ENCODE measurements at regions of chr22 and their contacts with region 1.

Region 1: GRCh38 chr22:28051787-28052356 is 132.8 kb upstream of the PITPNB start:
- DNase-seq: peak; percentile 66
- H3K4me3 ChIP-seq: no peak overlapping the region
- H3K27ac ChIP-seq: no peak overlapping the region
- H3K4me1 ChIP-seq: peaks cover 15% of the 10 kb centered on the region
- H3K27me3 ChIP-seq: no peaks in the 10 kb centered on the region
- CTCF ChIP-seq: peak; percentile 85
- POLR2A ChIP-seq: no peak

Region 2: DNA sequence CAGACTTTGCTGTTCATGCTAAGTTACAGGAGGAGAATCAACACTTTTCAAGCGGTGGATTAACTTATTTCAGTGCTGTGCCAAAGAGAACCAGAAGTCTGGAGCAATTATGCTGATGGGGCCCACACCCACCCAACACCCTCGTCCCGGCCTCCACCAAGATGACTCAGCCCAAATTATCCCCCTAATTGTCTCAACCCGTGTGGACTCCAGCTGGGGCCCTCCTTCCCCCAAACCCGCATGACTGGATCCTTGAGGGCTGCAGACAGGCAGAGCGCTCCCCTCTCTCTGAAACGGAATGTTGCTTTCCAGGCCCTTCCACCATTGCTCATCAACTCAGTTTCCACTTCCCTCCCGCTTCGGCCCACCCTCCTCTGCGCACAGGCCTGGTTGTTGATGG is 215.7 kb before region 1 on chr22:
- CTCF ChIA-PET with region 1: no interaction called
- POLR2A ChIA-PET with region 1: no interaction called
- dilution Hi-C with region 1: no loop called
- intact Hi-C with region 1: no loop called
- DNase-seq: no peak
- H3K4me3 ChIP-seq: no peak overlapping the region
- H3K27ac ChIP-seq: no peak overlapping the region
- H3K4me1 ChIP-seq: no peaks in the 10 kb centered on the region
- H3K27me3 ChIP-seq: no peaks in the 10 kb centered on the region
- CTCF ChIP-seq: no peak
- POLR2A ChIP-seq: no peak

Region 3: DNA sequence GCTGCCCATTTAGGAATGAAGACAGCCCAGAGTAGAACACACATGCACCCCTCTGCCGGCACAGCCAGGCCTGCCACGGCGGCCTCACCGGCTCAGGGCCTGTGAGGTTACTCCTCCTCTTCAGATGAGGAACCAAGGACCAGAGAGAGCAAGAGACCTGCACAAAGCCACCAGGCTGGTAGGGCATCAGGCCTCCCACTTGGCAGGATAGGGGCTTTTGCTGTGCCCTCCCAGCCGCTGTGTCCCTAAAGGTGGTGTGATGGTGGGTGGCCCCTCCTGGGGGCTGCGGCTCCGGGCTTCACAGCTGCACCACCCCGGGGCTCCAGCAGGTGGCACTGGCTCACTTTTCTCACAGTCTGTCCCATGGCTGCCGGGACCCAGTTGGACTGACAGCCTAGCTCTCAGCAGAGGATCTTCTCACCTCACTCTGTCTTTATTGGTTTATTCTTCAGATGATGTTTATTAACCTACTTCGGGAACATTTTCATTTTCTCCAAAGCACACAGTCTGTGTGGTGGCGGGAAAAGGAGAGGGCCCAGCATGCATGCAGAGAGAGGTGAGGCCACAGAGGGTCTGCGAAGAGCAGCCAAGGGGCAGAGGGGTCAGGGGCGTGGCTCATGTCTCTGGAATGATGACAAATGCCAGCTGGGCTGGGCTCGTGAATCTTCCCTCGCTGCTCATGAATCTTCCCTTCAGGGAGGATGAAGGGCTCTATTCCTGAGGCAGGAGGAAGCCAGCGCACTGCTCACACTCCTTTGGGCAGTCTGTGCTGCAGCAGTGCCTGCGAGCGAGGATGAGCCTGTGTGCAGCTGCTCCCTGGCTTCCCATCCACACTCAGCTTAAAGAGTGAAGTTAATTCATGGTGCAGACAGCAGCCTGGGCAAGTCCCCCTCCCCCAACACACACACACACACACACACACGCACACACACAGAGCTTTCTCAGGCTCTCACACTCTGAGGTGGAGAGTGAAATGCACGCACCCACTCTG is 31.7 kb before region 1 on chr22:
- CTCF ChIA-PET with region 1: interaction called, 56 read pairs
- POLR2A ChIA-PET with region 1: no interaction called
- dilution Hi-C with region 1: no loop called
- intact Hi-C with region 1: loop called (anchors 1 kb)
- DNase-seq: peak; percentile 52
- H3K4me3 ChIP-seq: no peak overlapping the region
- H3K27ac ChIP-seq: no peak overlapping the region
- H3K4me1 ChIP-seq: peaks cover 9% of the 10 kb centered on the region
- H3K27me3 ChIP-seq: no peaks in the 10 kb centered on the region
- CTCF ChIP-seq: peak; percentile 95 to 98
- POLR2A ChIP-seq: no peak

Region 4: DNA sequence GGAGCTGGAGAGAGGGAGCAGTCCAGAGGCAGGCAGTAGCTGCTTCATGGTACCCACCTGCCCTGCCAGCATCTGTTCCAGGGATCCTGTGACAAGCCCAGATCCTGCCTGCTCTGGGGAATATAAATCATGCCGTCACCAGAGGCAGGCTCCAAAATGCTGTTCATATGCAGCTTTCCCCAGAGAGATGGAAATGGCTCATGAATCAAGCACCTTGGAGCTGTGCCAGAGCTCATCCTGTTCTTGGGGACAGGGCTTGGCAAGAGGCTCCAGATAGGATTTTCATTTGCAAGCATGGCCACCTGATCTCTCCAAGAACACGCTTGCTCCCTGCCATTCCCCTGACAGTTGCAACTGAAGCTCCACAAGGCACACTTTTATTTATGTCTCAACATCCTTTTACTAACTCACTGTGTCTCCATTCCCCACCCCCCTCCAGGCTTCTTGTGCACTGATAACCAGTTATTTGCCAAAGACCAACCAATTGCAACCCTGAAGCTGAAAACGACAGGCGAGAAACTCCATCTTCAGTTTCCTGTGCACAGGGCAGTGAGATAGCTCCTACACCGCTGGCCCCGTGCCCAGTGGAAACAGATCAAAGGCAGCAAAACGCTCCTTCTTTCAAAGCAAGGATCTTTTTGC is 17.0 kb before region 1 on chr22:
- CTCF ChIA-PET with region 1: interaction called, 47 read pairs
- POLR2A ChIA-PET with region 1: no interaction called
- dilution Hi-C with region 1: no loop called
- intact Hi-C with region 1: no loop called
- DNase-seq: peak; percentile 86
- H3K4me3 ChIP-seq: no peak overlapping the region
- H3K27ac ChIP-seq: peak overlapping the region; percentile 0
- H3K4me1 ChIP-seq: peaks cover 41% of the 10 kb centered on the region
- H3K27me3 ChIP-seq: no peaks in the 10 kb centered on the region
- CTCF ChIP-seq: no peak
- POLR2A ChIP-seq: no peak

Region 5: DNA sequence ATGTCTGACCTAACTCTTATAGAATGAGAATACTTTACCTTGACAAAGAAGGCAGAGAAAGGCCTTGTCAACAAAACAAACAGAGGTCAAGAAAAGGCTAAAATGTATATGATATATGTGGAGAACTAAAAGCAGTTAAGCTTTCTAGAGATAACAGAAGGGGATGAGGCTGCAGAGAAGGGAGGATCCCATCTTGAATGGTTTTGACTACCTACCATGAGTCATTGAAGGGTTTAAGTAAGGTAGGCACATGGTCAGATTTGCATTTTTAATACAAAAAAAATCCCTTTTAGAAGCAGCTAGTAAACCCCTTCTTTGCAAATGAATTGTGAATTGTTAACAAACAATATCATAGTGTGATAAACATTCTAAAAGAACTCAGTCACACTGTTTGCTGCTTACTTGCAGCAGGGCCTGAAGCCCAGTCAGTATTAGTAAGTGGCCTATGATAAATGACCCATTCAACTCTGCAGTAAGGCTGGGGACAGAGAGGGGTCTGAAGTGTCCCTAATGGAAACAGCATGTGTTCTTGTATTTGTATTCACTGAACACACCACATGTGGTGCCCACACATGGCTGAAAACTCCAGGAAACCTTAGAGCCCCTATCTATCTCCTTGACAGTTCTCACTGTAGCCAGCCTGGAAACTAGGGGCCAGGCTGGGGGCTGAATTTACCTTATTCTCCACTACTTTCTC is 195.9 kb after region 1 on chr22:
- CTCF ChIA-PET with region 1: interaction called, 11 read pairs
- POLR2A ChIA-PET with region 1: no interaction called
- dilution Hi-C with region 1: no loop called
- intact Hi-C with region 1: no loop called
- DNase-seq: no peak
- H3K4me3 ChIP-seq: no peak overlapping the region
- H3K27ac ChIP-seq: no peak overlapping the region
- H3K4me1 ChIP-seq: no peaks in the 10 kb centered on the region
- H3K27me3 ChIP-seq: no peaks in the 10 kb centered on the region
- CTCF ChIP-seq: no peak
- POLR2A ChIP-seq: no peak

Region 6: DNA sequence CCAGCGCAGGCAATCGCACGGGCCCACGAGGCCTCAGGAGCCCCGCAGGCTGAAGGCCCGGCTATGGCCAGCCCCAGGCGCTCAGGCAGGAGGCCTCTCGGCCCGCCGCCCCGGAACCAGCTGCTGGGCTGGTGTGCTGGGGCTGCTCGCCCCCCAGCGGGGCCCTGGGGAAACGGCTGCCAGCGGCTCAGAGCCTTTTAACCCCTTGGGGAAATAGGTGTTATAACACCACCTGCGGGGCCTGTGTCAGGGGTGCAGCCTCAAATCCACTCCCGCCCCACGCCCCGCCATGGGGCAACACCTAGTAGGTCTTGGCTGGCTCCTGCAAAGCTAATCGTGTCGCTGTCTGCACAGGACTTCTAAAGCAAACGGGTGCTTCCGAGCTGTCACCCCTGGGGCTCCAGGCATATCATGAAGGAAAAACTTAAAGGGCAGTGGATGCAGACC is 390.4 kb after region 1 on chr22:
- CTCF ChIA-PET with region 1: interaction called, 20 read pairs
- POLR2A ChIA-PET with region 1: no interaction called
- dilution Hi-C with region 1: no loop called
- intact Hi-C with region 1: loop called (anchors 1 kb)
- DNase-seq: peak; percentile 59
- H3K4me3 ChIP-seq: peak overlapping the region; percentile 28 to 74 (median 46)
- H3K27ac ChIP-seq: no peak overlapping the region
- H3K4me1 ChIP-seq: peaks cover 25% of the 10 kb centered on the region
- H3K27me3 ChIP-seq: no peaks in the 10 kb centered on the region
- CTCF ChIP-seq: peak; percentile 62 to 78
- POLR2A ChIP-seq: no peak

Region 7: GRCh38 chr22:28488825-28489224 is 437.0 kb after region 1 on chr22:
- CTCF ChIA-PET with region 1: no interaction called
- POLR2A ChIA-PET with region 1: no interaction called
- dilution Hi-C with region 1: no loop called
- intact Hi-C with region 1: no loop called
- DNase-seq: no peak
- H3K4me3 ChIP-seq: no peak overlapping the region
- H3K27ac ChIP-seq: no peak overlapping the region
- H3K4me1 ChIP-seq: no peaks in the 10 kb centered on the region
- H3K27me3 ChIP-seq: no peaks in the 10 kb centered on the region
- CTCF ChIP-seq: no peak
- POLR2A ChIP-seq: no peak

Region 8: GRCh38 chr22:28594797-28595462 is 543.1 kb after region 1 on chr22:
- CTCF ChIA-PET with region 1: interaction called, 86 read pairs
- POLR2A ChIA-PET with region 1: no interaction called
- dilution Hi-C with region 1: no loop called
- intact Hi-C with region 1: loop called (anchors 1 kb)
- DNase-seq: peak; percentile 69
- H3K4me3 ChIP-seq: no peak overlapping the region
- H3K27ac ChIP-seq: no peak overlapping the region
- H3K4me1 ChIP-seq: peaks cover 4% of the 10 kb centered on the region
- H3K27me3 ChIP-seq: no peaks in the 10 kb centered on the region
- CTCF ChIP-seq: peak; percentile 46 to 53
- POLR2A ChIP-seq: no peak